MCF 10A (cell line): ENCODE measurements at regions of chr4 and their contacts with region 1.

Region 1: GRCh38 chr4:18767921-18768320 is 746.4 kb upstream of the LCORL start:
- DNase-seq: no peak
- H3K4me3 Mint-ChIP-seq: no peak overlapping the region
- H3K27ac Mint-ChIP-seq: no peak overlapping the region
- H3K4me1 Mint-ChIP-seq: no peaks in the 10 kb centered on the region
- H3K27me3 Mint-ChIP-seq: no peaks in the 10 kb centered on the region
- CTCF ChIP-seq: no peak

Region 2: GRCh38 chr4:18803781-18804180 is 35.9 kb after region 1 on chr4:
- CTCF ChIA-PET with region 1: no interaction called
- POLR2A ChIA-PET with region 1: no interaction called
- intact Hi-C with region 1: loop called (anchors 2 kb)
- DNase-seq: no peak
- H3K4me3 Mint-ChIP-seq: no peak overlapping the region
- H3K27ac Mint-ChIP-seq: no peak overlapping the region
- H3K4me1 Mint-ChIP-seq: no peaks in the 10 kb centered on the region
- H3K27me3 Mint-ChIP-seq: no peaks in the 10 kb centered on the region
- CTCF ChIP-seq: no peak